ENCODE measurements at regions of chr1 and their contacts with region 1.

Region 1: DNA sequence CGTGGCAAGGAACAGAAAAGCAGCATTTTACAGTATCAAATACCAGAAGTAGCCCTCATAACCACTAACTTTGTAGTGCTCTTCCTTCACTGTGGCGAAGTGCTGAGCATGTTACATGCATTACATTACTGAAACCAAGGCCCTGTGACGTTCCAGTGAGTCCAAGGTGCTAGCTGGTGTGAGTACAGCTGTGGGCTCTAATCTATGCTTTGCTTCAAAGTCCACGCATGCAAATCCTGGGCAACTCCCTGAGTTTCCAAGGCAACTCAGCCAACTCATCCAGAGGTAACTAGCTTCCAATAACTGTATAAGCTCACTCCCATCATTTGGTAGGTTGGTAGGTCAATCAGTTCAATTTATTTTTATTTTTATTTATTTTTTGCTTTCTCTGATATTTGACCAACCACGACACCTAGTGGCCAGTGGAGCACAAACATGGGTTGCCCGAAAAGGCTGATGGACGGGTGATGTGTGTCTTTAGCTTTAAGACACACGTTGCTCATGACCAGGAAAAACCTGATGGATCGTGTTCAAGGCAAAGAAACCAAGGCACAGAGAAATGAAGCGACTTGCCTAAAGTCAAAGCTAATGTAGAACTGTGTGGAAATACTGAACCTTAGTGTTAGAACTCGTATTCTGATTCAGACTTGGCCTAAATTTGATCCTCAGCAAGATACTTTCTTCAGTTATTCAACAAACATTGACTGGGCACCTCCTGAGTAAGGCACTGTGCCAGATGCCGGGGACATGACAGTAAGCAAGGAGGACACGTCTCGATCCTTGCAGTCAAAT is 73.0 kb downstream of the GNG12 start:
- DNase-seq: peak; percentile 75
- ATAC-seq: peak; percentile 79
- H3K4me3 Mint-ChIP-seq: no peak overlapping the region
- H3K27ac Mint-ChIP-seq: no peak overlapping the region
- H3K4me1 Mint-ChIP-seq: no peaks in the 10 kb centered on the region
- H3K27me3 Mint-ChIP-seq: peaks cover 23% of the 10 kb centered on the region
- CTCF ChIP-seq: peak; percentile 92

Region 2: DNA sequence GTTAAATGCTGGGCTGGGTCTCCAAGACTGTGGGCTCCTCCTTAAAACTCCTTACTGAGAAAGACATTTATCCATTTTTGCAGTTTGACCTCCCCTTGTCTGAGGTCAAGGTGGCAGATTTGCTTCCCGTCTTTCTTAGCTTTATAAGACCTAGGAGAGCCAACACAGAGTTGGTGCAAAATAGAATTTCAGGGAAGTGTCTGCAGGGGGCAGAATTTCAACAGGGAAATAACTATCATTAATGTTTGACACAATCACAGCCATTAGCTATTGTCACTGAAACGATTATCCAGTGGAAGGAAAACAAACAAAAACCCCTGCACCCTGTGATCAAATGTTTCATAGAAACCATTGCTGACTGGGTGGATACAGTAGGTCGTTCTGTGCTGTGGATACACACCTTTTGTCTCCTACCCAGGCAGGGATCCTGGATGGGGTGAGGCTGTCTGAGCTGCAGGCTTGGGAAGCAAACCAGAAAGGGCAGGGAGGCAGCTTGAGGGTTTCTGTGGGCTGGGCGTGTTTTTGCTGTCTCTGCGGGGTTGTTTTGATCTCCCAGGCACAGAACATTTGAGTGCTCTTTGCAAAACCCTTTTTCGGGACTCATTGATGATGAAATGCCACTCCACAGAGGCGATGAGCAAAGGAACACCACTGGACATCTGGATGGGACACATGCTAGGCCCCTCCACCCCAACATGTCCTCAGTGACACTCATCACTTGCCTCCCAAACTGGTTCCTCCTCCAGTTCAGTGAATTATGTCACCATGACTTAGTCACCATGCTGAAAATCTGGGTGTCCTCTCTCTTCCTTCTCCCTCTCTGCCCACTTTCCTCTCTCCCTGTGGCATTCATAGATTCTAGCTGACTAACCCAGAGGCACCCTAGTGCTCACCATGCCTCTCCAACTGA is 235.8 kb before region 1 on chr1:
- CTCF ChIA-PET with region 1: interaction called, 13 read pairs
- POLR2A ChIA-PET with region 1: no interaction called
- intact Hi-C with region 1: no loop called
- DNase-seq: no peak
- ATAC-seq: no peak
- H3K4me3 Mint-ChIP-seq: no peak overlapping the region
- H3K27ac Mint-ChIP-seq: no peak overlapping the region
- H3K4me1 Mint-ChIP-seq: no peaks in the 10 kb centered on the region
- H3K27me3 Mint-ChIP-seq: peaks cover 6% of the 10 kb centered on the region
- CTCF ChIP-seq: no peak

Region 3: DNA sequence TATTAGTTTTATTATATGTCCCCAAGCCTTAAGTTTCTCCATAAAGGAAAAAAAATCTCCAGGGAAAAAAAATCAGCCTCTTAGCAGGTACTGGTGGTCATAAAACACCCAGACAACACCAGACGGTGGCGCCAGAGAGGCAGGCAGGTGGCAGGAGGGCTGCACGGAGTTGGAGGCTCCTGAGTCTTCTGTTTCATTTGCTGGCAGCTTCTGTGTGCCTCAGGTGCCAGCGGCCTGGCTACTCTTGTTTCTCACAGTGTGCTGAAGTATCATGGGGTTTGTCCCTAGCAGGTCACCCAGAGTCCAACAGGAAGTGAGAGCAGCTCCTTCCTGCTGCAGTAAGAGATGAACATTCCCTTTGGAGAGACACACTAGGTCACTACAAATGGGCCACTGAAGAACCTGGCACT is 198.5 kb before region 1 on chr1:
- CTCF ChIA-PET with region 1: interaction called, 210 read pairs
- POLR2A ChIA-PET with region 1: interaction called, 3 read pairs
- intact Hi-C with region 1: loop called (anchors 1 kb)
- DNase-seq: peak; percentile 95
- ATAC-seq: peak; percentile 98
- H3K4me3 Mint-ChIP-seq: no peak overlapping the region
- H3K27ac Mint-ChIP-seq: no peak overlapping the region
- H3K4me1 Mint-ChIP-seq: peaks cover 4% of the 10 kb centered on the region
- H3K27me3 Mint-ChIP-seq: peaks cover 4% of the 10 kb centered on the region
- CTCF ChIP-seq: peak; percentile 88

Region 4: GRCh38 chr1:67674260-67675011 is 85.8 kb before region 1 on chr1:
- CTCF ChIA-PET with region 1: interaction called, 11 read pairs
- POLR2A ChIA-PET with region 1: no interaction called
- intact Hi-C with region 1: no loop called
- DNase-seq: peak; percentile 80
- ATAC-seq: peak; percentile 96
- H3K4me3 Mint-ChIP-seq: peak overlapping the region; percentile 20
- H3K27ac Mint-ChIP-seq: peak overlapping the region; percentile 78
- H3K4me1 Mint-ChIP-seq: peaks cover 19% of the 10 kb centered on the region
- H3K27me3 Mint-ChIP-seq: peaks cover 10% of the 10 kb centered on the region
- CTCF ChIP-seq: no peak

Region 5: DNA sequence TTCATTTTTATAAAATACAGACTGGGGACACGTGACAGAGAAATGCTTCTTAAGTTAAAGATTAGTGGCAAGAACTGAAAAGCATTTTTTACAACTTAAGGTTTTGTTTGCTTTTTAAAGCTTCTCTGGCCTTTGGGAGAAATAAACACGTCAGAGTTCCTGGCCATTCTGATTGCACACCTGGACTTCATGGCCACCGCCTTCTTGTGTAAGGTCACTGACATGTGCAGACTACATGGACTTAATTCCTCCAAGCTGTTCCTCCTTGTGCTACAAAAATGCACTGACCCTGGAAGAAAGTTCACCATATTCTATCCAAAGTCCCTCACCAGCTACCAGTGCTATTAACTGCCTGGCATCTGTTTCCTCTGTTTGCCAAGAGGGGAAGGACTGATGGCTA is 19.1 kb before region 1 on chr1:
- CTCF ChIA-PET with region 1: interaction called, 22 read pairs
- POLR2A ChIA-PET with region 1: no interaction called
- intact Hi-C with region 1: no loop called
- DNase-seq: no peak
- ATAC-seq: no peak
- H3K4me3 Mint-ChIP-seq: no peak overlapping the region
- H3K27ac Mint-ChIP-seq: no peak overlapping the region
- H3K4me1 Mint-ChIP-seq: peaks cover 6% of the 10 kb centered on the region
- H3K27me3 Mint-ChIP-seq: no peaks in the 10 kb centered on the region
- CTCF ChIP-seq: no peak

Region 6: GRCh38 chr1:67785847-67786753 is 25.9 kb after region 1 on chr1:
- CTCF ChIA-PET with region 1: interaction called, 16 read pairs
- POLR2A ChIA-PET with region 1: no interaction called
- intact Hi-C with region 1: no loop called
- DNase-seq: no peak
- ATAC-seq: no peak
- H3K4me3 Mint-ChIP-seq: no peak overlapping the region
- H3K27ac Mint-ChIP-seq: no peak overlapping the region
- H3K4me1 Mint-ChIP-seq: no peaks in the 10 kb centered on the region
- H3K27me3 Mint-ChIP-seq: peaks cover 2% of the 10 kb centered on the region
- CTCF ChIP-seq: no peak

Region 7: DNA sequence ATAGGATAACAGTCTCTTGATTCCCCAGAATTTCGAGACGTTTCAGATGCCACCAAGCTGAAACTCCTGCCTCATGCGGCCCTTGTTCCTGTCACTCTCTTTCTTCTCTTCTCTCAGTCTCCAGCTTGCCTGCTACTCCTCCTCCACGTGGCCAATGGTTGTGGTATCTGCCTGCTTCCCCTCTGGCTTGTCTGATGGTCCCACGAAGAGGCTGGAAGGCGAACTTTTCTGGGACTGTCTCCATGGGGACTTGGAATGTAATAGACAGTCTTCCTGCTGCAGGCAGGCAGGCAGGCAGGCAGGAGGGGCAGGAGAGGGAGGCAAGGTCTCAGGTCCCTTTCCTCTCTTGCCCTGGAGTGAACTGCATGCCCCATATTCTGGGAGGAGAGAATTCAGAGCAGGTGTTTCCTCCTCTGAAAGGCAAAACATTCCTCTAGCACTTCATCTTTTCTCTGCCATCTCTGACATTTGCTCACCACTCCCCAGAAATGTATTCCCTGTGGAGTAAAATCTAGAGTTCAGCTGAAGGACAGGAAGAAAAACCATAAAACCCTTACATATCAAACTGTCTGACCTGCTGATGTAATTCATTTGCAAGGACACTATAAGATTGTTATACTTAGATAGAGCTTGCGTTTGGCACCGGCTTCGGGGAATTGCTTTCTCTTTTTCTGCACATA is 137.2 kb after region 1 on chr1:
- CTCF ChIA-PET with region 1: no interaction called
- POLR2A ChIA-PET with region 1: no interaction called
- intact Hi-C with region 1: no loop called
- DNase-seq: no peak
- ATAC-seq: no peak
- H3K4me3 Mint-ChIP-seq: no peak overlapping the region
- H3K27ac Mint-ChIP-seq: no peak overlapping the region
- H3K4me1 Mint-ChIP-seq: no peaks in the 10 kb centered on the region
- H3K27me3 Mint-ChIP-seq: peaks cover 17% of the 10 kb centered on the region
- CTCF ChIP-seq: no peak

Region 8: GRCh38 chr1:67987046-67987799 is 227.0 kb after region 1 on chr1:
- CTCF ChIA-PET with region 1: no interaction called
- POLR2A ChIA-PET with region 1: no interaction called
- intact Hi-C with region 1: no loop called
- DNase-seq: no peak
- ATAC-seq: no peak
- H3K4me3 Mint-ChIP-seq: no peak overlapping the region
- H3K27ac Mint-ChIP-seq: no peak overlapping the region
- H3K4me1 Mint-ChIP-seq: no peaks in the 10 kb centered on the region
- H3K27me3 Mint-ChIP-seq: peaks cover 6% of the 10 kb centered on the region
- CTCF ChIP-seq: no peak

Region 9: GRCh38 chr1:68255301-68255700 is 495.1 kb after region 1 on chr1:
- CTCF ChIA-PET with region 1: no interaction called
- POLR2A ChIA-PET with region 1: no interaction called
- intact Hi-C with region 1: no loop called
- DNase-seq: no peak
- ATAC-seq: no peak
- H3K4me3 Mint-ChIP-seq: no peak overlapping the region
- H3K27ac Mint-ChIP-seq: no peak overlapping the region
- H3K4me1 Mint-ChIP-seq: no peaks in the 10 kb centered on the region
- H3K27me3 Mint-ChIP-seq: no peaks in the 10 kb centered on the region
- CTCF ChIP-seq: no peak

Measured in activated CD8-positive, alpha-beta T cell treated with anti-CD3 and anti-CD28 coated beads for 36 hours (primary cell).